Activated CD4-positive, alpha-beta T cell treated with anti-CD3 and anti-CD28 coated beads, Interleukin-2, amount 10 ng/mL, durations not matched to agents 7 days and 5 days (primary cell): ENCODE measurements at regions of chr20 and their contacts with region 1.

Region 1: GRCh38 chr20:47725248-47725973 is 59.9 kb downstream of the SULF2 start:
- DNase-seq: peak; percentile 94
- H3K4me3 Mint-ChIP-seq: no peak overlapping the region
- H3K27ac Mint-ChIP-seq: peak overlapping the region; percentile 71
- H3K4me1 Mint-ChIP-seq: peaks cover 52% of the 10 kb centered on the region
- H3K27me3 Mint-ChIP-seq: no peaks in the 10 kb centered on the region

Region 2: DNA sequence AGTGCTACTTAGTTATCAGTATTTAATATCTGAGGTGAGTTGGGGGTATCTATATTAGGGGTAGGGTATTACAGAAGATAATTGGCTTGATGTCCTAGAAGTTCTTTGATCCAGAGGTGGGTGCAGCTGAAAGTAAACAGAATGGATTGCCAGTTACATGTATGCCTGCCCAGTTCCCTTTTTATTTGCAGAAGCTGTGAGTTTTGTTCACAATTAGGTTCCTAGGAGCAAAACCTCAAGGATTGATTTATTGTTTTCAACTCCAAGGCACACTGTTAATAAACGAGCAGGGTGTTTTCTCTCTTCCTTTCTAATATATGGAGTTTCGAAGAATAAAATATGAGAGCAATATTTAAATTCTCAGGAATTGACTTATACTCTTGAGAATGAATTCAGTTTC is 69.1 kb before region 1 on chr20:
- CTCF ChIA-PET with region 1: no interaction called
- POLR2A ChIA-PET with region 1: no interaction called
- DNase-seq: no peak
- H3K4me3 Mint-ChIP-seq: no peak overlapping the region
- H3K27ac Mint-ChIP-seq: no peak overlapping the region
- H3K4me1 Mint-ChIP-seq: no peaks in the 10 kb centered on the region
- H3K27me3 Mint-ChIP-seq: no peaks in the 10 kb centered on the region

Region 3: DNA sequence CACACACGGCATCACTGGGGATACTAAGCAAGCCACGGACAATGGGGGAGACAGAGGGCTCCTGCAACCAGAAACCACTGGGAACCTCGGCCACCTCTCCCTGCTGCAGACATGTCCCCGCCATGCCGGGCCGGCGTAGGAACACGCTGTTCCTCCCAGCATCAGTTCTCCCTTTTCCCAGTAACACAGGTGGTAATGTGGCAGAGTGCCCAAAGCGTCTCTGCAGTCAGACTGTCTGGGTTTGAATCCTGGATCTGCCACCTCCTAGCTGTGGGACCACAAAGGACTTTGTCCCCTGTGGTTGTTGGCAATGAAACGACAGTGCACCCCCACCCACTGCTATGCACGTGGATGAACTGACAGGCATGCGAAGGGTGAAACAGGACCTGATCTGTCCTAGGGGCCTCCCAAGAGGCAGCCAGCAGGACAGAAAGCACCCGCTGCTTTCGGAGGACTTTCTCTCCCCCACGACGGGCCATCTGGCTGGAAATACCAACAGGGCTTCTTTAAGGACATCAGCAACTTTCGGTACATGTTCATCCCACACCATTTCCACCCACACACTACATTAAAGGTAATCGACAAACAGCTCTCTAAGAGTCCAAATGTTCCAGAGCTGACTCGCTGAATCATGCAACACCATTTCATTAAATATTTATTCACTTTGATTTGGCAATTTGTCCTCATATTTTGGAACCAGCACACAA is 14.2 kb before region 1 on chr20:
- CTCF ChIA-PET with region 1: interaction called, 14 read pairs
- POLR2A ChIA-PET with region 1: no interaction called
- DNase-seq: no peak
- H3K4me3 Mint-ChIP-seq: no peak overlapping the region
- H3K27ac Mint-ChIP-seq: no peak overlapping the region
- H3K4me1 Mint-ChIP-seq: no peaks in the 10 kb centered on the region
- H3K27me3 Mint-ChIP-seq: peaks cover 3% of the 10 kb centered on the region

Region 4: DNA sequence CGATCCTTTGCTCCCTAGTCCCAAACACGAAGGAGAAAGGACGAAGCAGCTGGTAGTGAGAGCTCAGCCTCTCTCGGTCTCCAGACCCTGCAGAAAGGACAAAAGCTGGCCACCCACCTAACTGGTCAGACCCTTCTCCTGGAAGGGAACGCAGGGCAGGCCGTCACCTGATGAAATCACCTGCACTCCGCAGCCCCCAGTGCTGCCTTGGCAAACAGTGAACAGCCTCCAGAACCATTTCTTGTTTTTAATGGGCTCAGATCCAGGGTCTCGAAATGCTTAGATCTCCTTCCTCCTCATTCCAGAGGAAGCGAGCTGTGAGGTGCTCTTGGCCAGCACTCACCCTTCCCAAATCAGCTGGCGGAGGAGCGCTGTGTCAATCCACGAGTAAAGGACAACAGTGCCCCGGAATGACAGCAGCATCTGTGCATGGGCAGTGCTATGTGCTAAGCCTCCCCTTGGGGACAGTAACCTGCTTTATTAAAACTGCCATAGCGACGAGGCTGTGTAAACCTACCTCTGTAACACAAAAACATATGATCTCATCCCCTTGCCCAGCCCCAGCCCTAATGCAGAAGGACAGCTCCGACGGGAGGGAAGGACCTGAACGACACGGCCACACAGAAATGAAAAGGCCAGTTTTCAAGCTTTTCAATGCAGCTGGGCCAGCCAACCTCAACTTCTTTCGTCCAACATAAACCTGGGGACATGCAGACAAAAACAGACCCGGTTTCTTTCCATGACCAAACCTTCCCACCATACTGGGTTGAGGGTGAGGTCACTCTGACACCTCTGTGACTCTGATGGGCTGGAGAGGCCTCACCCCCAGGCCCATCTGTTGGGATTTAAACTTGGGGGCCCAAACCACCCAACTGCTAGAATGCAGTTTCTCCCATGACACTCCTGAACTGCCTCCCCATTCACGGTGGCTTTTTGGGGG is 16.5 kb after region 1 on chr20:
- CTCF ChIA-PET with region 1: no interaction called
- POLR2A ChIA-PET with region 1: no interaction called
- DNase-seq: no peak
- H3K4me3 Mint-ChIP-seq: no peak overlapping the region
- H3K27ac Mint-ChIP-seq: no peak overlapping the region
- H3K4me1 Mint-ChIP-seq: no peaks in the 10 kb centered on the region
- H3K27me3 Mint-ChIP-seq: peaks cover 2% of the 10 kb centered on the region

Region 5: GRCh38 chr20:47753576-47754387 is 28.4 kb after region 1 on chr20:
- CTCF ChIA-PET with region 1: interaction called, 12 read pairs
- POLR2A ChIA-PET with region 1: no interaction called
- DNase-seq: no peak
- H3K4me3 Mint-ChIP-seq: no peak overlapping the region
- H3K27ac Mint-ChIP-seq: no peak overlapping the region
- H3K4me1 Mint-ChIP-seq: peaks cover 8% of the 10 kb centered on the region
- H3K27me3 Mint-ChIP-seq: peaks cover 3% of the 10 kb centered on the region

Region 6: GRCh38 chr20:48620519-48621254 is 895.3 kb after region 1 on chr20:
- CTCF ChIA-PET with region 1: interaction called, 12 read pairs
- POLR2A ChIA-PET with region 1: no interaction called
- DNase-seq: peak; percentile 78
- H3K4me3 Mint-ChIP-seq: peak overlapping the region; percentile 37
- H3K27ac Mint-ChIP-seq: peak overlapping the region; percentile 61
- H3K4me1 Mint-ChIP-seq: peaks cover 12% of the 10 kb centered on the region
- H3K27me3 Mint-ChIP-seq: no peaks in the 10 kb centered on the region